ENCODE measurements at regions of chr11 and their contacts with region 1.

Region 1: GRCh38 chr11:72585762-72586311 is 88.4 kb downstream of the PDE2A start:
- DNase-seq: peak; percentile 54 to 70
- H3K4me3 ChIP-seq: no peak overlapping the region
- H3K27ac ChIP-seq: no peak overlapping the region
- H3K4me1 ChIP-seq: peaks cover 0 to 6% of the 10 kb centered on the region in 2 donors
- H3K27me3 ChIP-seq: peaks cover 0 to 9% of the 10 kb centered on the region in 2 donors
- CTCF ChIP-seq: peak; percentile 84 to 94 (median 88)
- POLR2A ChIP-seq: no peak

Region 2: DNA sequence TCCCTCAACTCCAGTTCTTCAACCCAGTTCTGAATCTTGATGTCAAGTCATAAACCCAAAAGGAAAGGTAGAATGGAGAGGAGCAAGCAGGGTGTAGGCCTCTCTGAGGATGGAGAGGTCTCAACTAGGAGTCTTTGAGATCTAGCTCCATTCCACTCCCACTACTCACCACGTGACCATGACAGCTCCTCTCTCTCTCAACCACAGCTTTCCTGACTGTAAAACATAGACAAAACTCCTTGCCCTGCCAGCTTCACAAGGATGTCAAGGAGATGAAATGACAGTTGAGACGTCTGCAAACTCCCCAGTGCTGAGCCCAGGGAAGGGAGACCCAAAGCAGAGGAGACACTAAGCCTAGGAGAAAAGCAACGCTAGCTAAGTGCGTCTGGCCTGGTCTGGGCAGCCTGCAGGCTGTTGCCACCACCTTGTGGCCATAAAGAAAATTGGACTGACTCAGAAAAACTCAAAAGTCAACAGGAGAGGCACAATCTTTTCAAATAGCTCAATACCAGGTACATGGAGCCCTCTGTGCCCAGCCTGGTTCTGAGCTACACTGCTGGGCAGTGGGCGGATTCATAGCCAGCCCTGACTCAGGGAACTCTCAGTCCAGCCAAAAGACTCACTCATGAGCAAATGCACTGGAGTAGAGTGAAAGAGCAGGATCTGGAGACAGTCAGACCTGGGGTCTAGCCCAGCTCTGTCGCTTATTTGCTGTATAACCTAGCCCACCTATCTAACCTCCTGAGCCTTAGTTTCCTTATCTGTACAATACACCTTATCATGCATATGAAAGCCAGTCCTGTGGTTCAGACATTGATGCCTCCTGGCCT is 154.9 kb before region 1 on chr11:
- intact Hi-C with region 1: no loop called
- DNase-seq: no peak
- H3K4me3 ChIP-seq: no peak overlapping the region
- H3K27ac ChIP-seq: no peak overlapping the region
- H3K4me1 ChIP-seq: peaks cover 0 to 5% of the 10 kb centered on the region in 2 donors
- H3K27me3 ChIP-seq: no peaks in the 10 kb centered on the region
- CTCF ChIP-seq: peak; percentile 51 to 74 (median 70)
- POLR2A ChIP-seq: no peak

Region 3: GRCh38 chr11:72642884-72643511 is 57.2 kb after region 1 on chr11:
- intact Hi-C with region 1: loop called (anchors 10 kb)
- DNase-seq: peak; percentile 38 to 64
- H3K4me3 ChIP-seq: peak overlapping the region; percentile 42 to 54
- H3K27ac ChIP-seq: peak overlapping the region; percentile 17 to 73
- H3K4me1 ChIP-seq: no peaks in the 10 kb centered on the region
- H3K27me3 ChIP-seq: no peaks in the 10 kb centered on the region
- CTCF ChIP-seq: peak; percentile 95 to 99 (median 96)
- POLR2A ChIP-seq: no peak